Panc1 (cell line): ENCODE measurements at regions of chr1 and their contacts with region 1.

Region 1: DNA sequence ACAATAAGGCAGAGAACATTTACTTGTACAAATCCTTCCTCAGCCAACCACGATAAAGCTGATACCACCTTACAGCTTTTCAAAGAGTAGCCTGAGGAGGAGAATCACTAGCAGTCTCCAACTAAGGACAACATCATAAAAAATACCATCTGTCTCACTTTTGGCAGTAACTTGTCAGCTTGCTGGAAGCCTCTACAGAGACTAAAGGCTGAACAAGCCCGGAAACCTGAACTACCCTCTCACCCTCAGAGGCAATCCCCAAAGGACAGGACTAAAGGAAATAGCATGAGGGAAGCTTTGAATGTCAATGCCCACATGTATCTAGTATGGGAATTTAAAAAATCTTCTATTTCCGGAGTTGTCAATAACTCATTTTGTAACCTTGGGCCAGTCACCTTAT is 10.6 kb downstream of the SRSF4 start:
- DNase-seq: no peak
- ATAC-seq: peak; percentile 45; the same call in 1 of the 2 replicates
- H3K4me3 ChIP-seq: no peak overlapping the region
- H3K27ac ChIP-seq: no peak overlapping the region
- H3K4me1 ChIP-seq: peaks cover 10% of the 10 kb centered on the region; the same call in 1 of the 2 replicates
- H3K27me3 ChIP-seq: no peaks in the 10 kb centered on the region
- CTCF ChIP-seq: no peak

Region 2: DNA sequence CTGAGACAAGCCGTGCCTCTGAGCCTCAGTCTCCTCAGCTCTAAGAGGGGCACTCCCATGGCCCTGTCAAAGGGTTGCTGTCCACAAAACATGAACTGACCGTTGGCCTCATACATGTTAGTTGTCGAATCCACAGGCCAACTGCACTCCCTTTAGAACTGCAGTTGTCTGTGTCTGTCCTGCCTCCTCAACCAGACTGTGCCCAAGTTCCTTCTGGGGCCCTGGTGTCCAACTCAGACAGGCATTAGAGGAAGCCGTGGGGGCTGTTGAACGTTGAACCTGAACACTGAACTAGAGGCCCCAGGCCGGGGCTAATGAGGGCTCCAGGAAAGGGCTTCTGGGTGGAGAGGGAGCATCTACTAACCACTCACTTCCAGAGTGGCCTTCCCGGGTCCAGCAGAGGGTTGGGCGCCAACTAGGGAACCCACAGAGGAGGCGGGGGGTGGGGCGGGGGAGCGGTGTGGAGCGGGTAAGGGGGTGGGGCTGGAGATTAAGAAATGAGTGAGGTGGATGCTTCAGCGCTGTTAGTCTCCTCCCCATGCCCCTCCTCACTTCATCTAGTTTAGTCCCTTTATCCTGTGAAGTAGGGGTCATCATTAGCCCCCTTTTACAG is 579.3 kb before region 1 on chr1 and contains the start of gene RAB42:
- CTCF ChIA-PET with region 1: no interaction called
- POLR2A ChIA-PET with region 1: interaction called, 12 read pairs
- in situ Hi-C with region 1: no loop called
- intact Hi-C with region 1: no loop called
- DNase-seq: no peak
- ATAC-seq: peak; percentile 64
- H3K4me3 ChIP-seq: peak within 1 kb of the TSS; percentile 34 to 51
- H3K27ac ChIP-seq: 0 out of 2 replicates have a peak within 1 kb of the TSS, but pooled peaks have one; percentile 18
- H3K4me1 ChIP-seq: no peaks in the 10 kb centered on the region; the same call in 1 of the 2 replicates
- H3K27me3 ChIP-seq: no peaks in the 10 kb centered on the region
- CTCF ChIP-seq: no peak
- total RNA-seq, gene RAB42: 4.2 TPM

Region 3: DNA sequence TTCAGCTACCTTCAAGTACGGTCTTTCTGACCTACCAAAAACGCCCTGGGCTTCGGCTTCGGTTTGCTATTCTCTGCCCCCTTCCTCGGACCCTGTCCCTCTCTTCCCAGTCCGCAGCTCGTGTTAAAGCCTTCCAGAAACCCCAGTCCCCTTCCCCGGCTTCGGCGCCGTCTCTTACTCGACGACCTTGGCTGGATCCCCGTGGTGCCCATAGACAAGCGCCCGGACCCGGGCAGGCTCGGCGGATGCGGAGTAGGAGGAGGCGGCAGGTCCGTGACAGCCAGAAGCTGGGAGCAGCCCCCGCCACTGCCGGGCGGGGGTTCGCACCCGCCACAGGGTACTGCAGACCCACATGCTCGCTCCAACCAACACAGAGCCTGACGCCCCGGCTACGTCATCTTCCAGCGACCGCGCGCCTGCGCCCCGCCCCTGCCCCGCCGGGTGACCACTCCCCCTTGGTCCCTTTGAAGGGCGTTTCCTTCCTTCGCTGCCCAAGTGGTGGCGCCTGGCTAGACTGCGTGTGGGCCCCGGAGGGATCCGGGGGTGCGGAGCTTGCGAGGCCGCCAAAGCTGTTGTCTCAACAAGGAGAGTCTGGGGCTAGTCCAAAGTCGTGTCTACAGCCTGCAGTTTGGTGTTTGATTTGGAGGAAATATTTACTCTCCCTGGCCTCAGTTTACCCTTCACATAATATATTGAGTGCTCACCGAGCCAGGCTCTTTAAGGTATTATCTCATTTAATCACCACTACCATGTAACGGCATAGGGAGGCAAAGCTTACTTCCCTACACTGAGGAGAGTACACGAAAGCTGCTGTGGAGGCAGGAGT is 59.7 kb after region 1 on chr1 and contains the start of gene MECR:
- CTCF ChIA-PET with region 1: interaction called, 12 read pairs
- POLR2A ChIA-PET with region 1: no interaction called
- in situ Hi-C with region 1: no loop called
- intact Hi-C with region 1: no loop called
- DNase-seq: peak; percentile 64
- ATAC-seq: peak; percentile 99
- H3K4me3 ChIP-seq: peak within 1 kb of the TSS; percentile 98 to 99
- H3K27ac ChIP-seq: peak within 1 kb of the TSS; percentile 86
- H3K4me1 ChIP-seq: peaks cover 10% of the 10 kb centered on the region
- H3K27me3 ChIP-seq: no peaks in the 10 kb centered on the region; the same call in 1 of the 2 replicates
- CTCF ChIP-seq: peak; percentile 54
- total RNA-seq, gene MECR: 25.7 TPM

Region 4: DNA sequence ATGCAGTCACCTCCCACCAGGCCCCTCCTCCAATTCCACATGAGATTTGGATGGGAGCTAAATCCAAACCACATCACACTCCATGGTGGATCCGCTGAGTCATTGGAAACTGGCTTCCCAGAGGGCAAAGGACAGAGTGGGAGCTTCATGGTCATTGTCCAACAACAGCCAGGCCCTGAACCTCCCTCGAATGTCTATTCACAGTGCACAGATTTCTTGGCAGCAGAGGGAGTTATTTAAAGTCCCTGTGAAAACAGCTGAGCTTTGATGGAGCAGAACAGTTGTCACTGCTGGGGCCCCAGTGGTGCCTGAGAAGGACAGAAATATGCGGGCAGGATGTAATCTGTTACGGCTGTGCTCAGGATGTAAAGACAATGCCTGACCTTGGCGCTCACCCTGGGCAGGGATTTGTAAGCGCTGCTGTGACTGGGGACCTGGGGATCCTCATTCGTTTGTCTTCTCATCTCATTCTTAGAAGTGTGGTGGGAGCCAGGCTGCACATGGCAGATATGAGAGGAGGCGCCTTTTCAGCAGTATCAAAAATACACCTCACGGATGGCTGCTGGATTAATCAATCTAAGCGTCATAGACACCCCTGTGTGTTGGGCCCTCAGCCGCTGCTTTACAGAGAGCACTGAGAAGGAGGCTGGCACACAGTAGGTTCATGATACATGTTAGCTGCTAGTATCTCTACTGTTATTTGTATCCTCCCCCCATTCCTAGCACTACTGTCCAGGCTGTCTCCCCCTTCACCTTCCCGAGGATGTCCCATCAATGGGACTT is 504.6 kb after region 1 on chr1:
- CTCF ChIA-PET with region 1: no interaction called
- POLR2A ChIA-PET with region 1: no interaction called
- in situ Hi-C with region 1: no loop called
- intact Hi-C with region 1: no loop called
- DNase-seq: no peak
- ATAC-seq: no peak
- H3K4me3 ChIP-seq: no peak overlapping the region
- H3K27ac ChIP-seq: no peak overlapping the region
- H3K4me1 ChIP-seq: no peaks in the 10 kb centered on the region
- H3K27me3 ChIP-seq: no peaks in the 10 kb centered on the region
- CTCF ChIP-seq: no peak